Testis (tissue), 5 donors: ENCODE measurements at regions of chr2 and their contacts with region 1.

Region 1: DNA sequence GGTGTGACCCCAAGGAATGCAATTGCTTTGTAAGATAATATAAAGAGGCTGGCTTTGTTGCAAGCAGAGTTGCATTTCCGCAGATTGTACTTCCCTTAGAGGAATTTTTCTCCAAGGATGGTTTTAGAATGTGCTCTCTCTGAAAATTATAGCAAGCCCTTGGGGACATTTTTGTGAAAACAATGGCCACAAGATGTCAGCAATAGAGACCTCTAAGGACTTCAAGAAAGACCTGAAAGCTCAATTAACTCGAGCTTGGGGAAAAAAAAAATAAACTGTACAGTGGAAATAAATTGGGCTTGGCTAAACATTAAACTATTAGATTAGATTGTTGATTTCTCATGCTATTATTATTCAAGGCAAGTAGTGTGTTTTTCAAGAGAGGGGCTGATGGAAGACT is 81.3 kb upstream of the KYNU start:
- DNase-seq: no peak
- H3K4me3 ChIP-seq: no peak overlapping the region
- H3K27ac ChIP-seq: no peak overlapping the region
- H3K4me1 ChIP-seq: no peaks in the 10 kb centered on the region
- H3K27me3 ChIP-seq: no peaks in the 10 kb centered on the region
- CTCF ChIP-seq: no peak
- POLR2A ChIP-seq: no peak

Region 2: DNA sequence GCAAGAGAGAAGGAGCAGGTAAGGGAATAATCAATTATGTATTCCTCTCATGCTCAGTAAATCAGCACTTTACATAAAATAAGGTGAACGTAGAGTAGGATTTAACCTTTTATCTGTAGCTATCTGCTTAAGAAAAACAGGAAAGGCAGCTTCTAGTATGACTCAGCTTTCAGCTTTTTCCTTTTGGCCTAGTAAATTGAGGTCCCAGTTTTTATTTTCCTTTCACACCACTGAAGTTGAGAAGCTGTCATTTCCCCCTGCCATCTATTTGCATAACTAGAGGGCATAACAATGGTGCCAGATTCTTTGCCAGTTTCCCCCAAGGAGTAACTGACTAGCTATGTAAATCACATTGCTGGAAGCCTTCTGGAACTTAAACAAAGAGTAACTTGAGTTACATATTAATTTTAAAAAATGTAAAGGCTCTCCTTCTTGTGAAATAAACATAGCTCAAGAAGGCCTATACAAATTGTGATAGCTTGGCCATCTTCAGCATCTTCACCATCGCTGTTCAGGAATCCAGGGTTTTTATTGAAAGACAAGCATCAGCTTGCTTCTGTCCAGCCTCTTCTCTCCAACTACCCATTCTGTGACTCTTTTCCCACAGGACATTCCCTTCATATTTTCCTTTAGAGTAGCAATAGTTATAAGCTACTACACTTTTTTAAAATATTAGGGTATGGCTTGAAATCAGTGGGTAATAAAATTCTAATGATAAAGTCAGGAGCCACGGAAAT is 178.3 kb after region 1 on chr2:
- intact Hi-C with region 1: loop called (anchors 10 kb)
- DNase-seq: no peak
- H3K4me3 ChIP-seq: no peak overlapping the region
- H3K27ac ChIP-seq: no peak overlapping the region
- H3K4me1 ChIP-seq: no peaks in the 10 kb centered on the region
- H3K27me3 ChIP-seq: no peaks in the 10 kb centered on the region
- CTCF ChIP-seq: no peak
- POLR2A ChIP-seq: no peak